ENCODE measurements at regions of chr1 and their contacts with region 1.

Region 1: GRCh38 chr1:145963995-145964901 is at the starts of genes ANKRD34A and POLR3GL:
- DNase-seq: peak; percentile 90
- H3K4me3 Mint-ChIP-seq: peak within 1 kb of the TSS; percentile 90
- H3K27ac Mint-ChIP-seq: peak within 1 kb of the TSS; percentile 81
- H3K4me1 Mint-ChIP-seq: peaks cover 42% of the 10 kb centered on the region
- H3K27me3 Mint-ChIP-seq: no peaks in the 10 kb centered on the region
- total RNA-seq, gene ANKRD34A: 4.1 TPM in 2 replicates
- total RNA-seq, gene POLR3GL: 13.2 and 14.7 TPM in 2 replicates

Region 2: GRCh38 chr1:145740266-145740665 is 224.0 kb before region 1 on chr1:
- intact Hi-C with region 1: no loop called
- DNase-seq: no peak
- H3K4me3 Mint-ChIP-seq: no peak overlapping the region
- H3K27ac Mint-ChIP-seq: no peak overlapping the region
- H3K4me1 Mint-ChIP-seq: no peaks in the 10 kb centered on the region
- H3K27me3 Mint-ChIP-seq: no peaks in the 10 kb centered on the region

Region 3: GRCh38 chr1:145918144-145918992 is 45.9 kb before region 1 on chr1 and contains the start of gene PEX11B:
- intact Hi-C with region 1: loop called (anchors 2 kb)
- DNase-seq: peak; percentile 88
- H3K4me3 Mint-ChIP-seq: peak within 1 kb of the TSS; percentile 88
- H3K27ac Mint-ChIP-seq: peak within 1 kb of the TSS; percentile 92
- H3K4me1 Mint-ChIP-seq: peaks cover 35% of the 10 kb centered on the region
- H3K27me3 Mint-ChIP-seq: no peaks in the 10 kb centered on the region
- total RNA-seq, gene PEX11B: 22.1 and 23.4 TPM in 2 replicates

Region 4: GRCh38 chr1:145949219-145949618 is 15.0 kb before region 1 on chr1:
- intact Hi-C with region 1: no loop called
- DNase-seq: no peak
- H3K4me3 Mint-ChIP-seq: no peak overlapping the region
- H3K27ac Mint-ChIP-seq: no peak overlapping the region
- H3K4me1 Mint-ChIP-seq: peaks cover 26% of the 10 kb centered on the region
- H3K27me3 Mint-ChIP-seq: no peaks in the 10 kb centered on the region

Region 5: GRCh38 chr1:146036965-146037646 is 72.9 kb after region 1 on chr1:
- intact Hi-C with region 1: loop called (anchors 2 kb)
- DNase-seq: peak; percentile 71
- H3K4me3 Mint-ChIP-seq: peak overlapping the region; percentile 97
- H3K27ac Mint-ChIP-seq: peak overlapping the region; percentile 90
- H3K4me1 Mint-ChIP-seq: peaks cover 41% of the 10 kb centered on the region
- H3K27me3 Mint-ChIP-seq: peaks cover 7% of the 10 kb centered on the region